HCT116 (cell line): ENCODE measurements at regions of chr5 and their contacts with region 1.

Region 1: GRCh38 chr5:108748401-108749127 is 867 bp downstream of the FER start:
- DNase-seq: peak; percentile 98
- ATAC-seq: peak; percentile 96
- H3K4me3 ChIP-seq: peak overlapping the region; percentile 80 to 86
- H3K27ac ChIP-seq: peak overlapping the region; percentile 68
- H3K4me1 ChIP-seq: peaks cover 7 to 28% of the 10 kb centered on the region in 2 experiments
- H3K27me3 ChIP-seq: no peaks in the 10 kb centered on the region
- CTCF ChIP-seq: peak in 1 of 3 experiments; percentile 5; a peak in 1 of 6 replicates
- POLR2A ChIP-seq: peak; percentile 87
- RAD21 ChIP-seq: peak; percentile 4; the same call in 1 of the 2 replicates

Region 2: DNA sequence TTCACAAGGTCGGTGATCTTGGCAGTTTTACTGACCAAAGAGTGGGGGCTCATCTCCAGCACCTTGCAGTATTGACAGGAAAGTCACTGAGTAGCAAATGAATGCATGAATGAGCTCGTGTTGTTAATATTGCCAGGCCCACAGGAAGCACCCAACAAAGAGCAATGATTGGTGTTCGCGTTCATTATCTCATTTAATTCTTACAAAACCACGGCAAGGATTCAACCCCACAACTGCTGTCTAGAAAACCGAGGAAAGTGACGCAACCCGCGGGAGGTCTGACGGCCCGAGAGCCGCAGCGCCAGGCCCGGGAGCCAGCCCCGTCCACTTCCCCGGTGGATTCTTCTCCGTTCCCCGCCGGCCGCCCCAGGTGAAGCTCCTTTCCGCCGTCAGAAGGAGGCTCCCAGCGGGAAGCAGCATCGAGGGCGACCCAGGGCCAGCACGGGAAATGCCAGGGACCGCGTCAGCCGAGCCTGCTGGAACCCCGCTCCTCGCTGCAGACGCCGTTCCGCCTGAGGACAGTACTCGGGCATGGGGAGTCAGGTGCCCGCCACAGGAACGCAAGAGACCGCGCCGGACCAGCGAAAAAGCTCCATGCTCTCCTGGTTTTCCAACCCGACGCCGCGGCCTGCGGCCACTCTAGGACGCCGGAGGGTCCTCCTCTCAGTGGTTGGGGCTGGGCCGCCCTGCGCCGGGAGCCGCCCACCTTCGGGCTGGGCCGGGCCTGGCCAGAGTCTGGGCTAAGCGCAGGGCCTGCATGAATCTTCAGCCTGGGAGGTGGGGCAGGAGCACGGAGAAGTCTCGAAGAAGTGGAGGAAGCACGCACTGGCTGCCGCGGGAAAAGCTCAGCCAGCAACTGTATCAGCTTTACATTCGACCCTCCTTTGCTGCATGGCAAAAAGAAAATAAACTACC is 20.7 kb before region 1 on chr5:
- CTCF ChIA-PET with region 1: no interaction called
- POLR2A ChIA-PET with region 1: interaction called, 13 read pairs
- RAD21 ChIA-PET with region 1: no interaction called
- intact Hi-C with region 1: loop called (anchors 2 kb)
- DNase-seq: peak; percentile 82
- ATAC-seq: peak; percentile 100
- H3K4me3 ChIP-seq: peak overlapping the region; percentile 66 to 76
- H3K27ac ChIP-seq: peak overlapping the region; percentile 82
- H3K4me1 ChIP-seq: peaks cover 0 to 38% of the 10 kb centered on the region in 2 experiments; a peak in 2 of 4 replicates
- H3K27me3 ChIP-seq: no peaks in the 10 kb centered on the region
- CTCF ChIP-seq: no peak
- POLR2A ChIP-seq: peak; percentile 1
- RAD21 ChIP-seq: peak; percentile 17

Region 3: DNA sequence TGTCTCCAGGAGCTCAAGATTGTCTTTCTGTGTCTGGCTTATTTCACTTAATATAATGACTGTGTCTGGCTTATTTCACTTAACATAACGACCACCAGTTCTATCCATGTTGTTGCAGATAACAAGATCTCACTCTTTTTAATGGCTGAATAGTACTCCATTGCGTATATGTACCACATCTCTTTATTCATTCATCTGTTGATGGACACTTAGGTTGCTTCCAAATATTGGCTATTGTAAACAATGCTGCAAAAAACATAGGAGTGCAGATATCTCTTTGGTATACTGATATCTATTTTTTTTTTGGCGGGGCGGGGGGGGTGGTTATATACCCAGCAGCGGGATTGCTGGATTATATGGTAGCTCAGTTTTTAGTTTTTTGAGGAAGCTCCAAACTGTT is 44.6 kb after region 1 on chr5:
- CTCF ChIA-PET with region 1: no interaction called
- POLR2A ChIA-PET with region 1: no interaction called
- RAD21 ChIA-PET with region 1: no interaction called
- intact Hi-C with region 1: loop called (anchors 5 kb)
- DNase-seq: no peak
- ATAC-seq: no peak
- H3K4me3 ChIP-seq: no peak overlapping the region
- H3K27ac ChIP-seq: no peak overlapping the region
- H3K4me1 ChIP-seq: peaks cover 5 to 32% of the 10 kb centered on the region in 2 experiments; a peak in 3 of 4 replicates
- H3K27me3 ChIP-seq: no peaks in the 10 kb centered on the region
- CTCF ChIP-seq: no peak
- POLR2A ChIP-seq: no peak
- RAD21 ChIP-seq: no peak